Endothelial cell of umbilical vein (primary cell): ENCODE measurements at regions of chr14 and their contacts with region 1.

Region 1: GRCh38 chr14:75560962-75561432 is 17.4 kb upstream of the FLVCR2 start:
- DNase-seq: peak; percentile 76
- H3K4me3 ChIP-seq: no peak overlapping the region
- H3K27ac ChIP-seq: no peak overlapping the region
- H3K4me1 ChIP-seq: no peaks in the 10 kb centered on the region
- H3K27me3 ChIP-seq: peaks cover 0 to 4% of the 10 kb centered on the region in 2 experiments
- CTCF ChIP-seq: peak; percentile 88 to 90
- POLR2A ChIP-seq: no peak

Region 2: GRCh38 chr14:75132382-75133086 is 428.5 kb before region 1 on chr14:
- CTCF ChIA-PET with region 1: interaction called, 5 read pairs
- POLR2A ChIA-PET with region 1: no interaction called
- dilution Hi-C with region 1: no loop called
- intact Hi-C with region 1: loop called (anchors 10 kb)
- DNase-seq: peak; percentile 81
- H3K4me3 ChIP-seq: no peak overlapping the region
- H3K27ac ChIP-seq: no peak overlapping the region
- H3K4me1 ChIP-seq: peaks cover 10% of the 10 kb centered on the region
- H3K27me3 ChIP-seq: no peaks in the 10 kb centered on the region
- CTCF ChIP-seq: peak; percentile 38 to 55
- POLR2A ChIP-seq: no peak

Region 3: DNA sequence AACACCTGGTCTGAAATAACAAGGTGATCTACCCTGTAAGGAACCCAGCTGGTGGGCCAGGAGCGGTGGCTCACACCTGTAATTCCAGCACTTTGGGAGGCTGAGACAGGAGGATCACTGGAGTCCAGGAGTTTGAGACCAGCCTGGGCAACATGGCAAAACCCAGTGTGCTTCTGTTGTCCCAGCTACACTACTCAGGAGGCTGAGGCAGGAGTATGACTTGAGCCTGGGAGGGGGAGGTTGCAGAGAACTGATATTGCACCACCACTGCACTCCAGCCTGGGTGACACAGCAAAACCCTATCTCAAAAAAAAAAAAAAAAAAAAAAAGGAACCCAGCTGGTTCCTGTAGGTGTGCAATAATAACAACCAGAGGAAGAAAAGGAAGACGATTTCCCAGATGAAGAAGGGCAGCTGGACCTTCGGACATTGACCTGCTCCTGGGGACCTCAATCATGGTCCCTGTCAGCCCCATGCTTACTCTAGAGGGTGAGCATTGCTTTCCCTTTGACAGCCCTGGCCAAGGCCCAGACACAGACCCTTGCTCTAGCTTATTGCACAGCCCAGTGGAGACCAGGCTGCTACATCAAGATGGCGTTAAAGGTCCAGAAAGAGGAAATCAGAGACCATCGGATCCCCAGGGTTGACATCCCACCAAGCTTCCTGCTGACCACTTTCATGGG is 277.0 kb before region 1 on chr14:
- CTCF ChIA-PET with region 1: no interaction called
- POLR2A ChIA-PET with region 1: no interaction called
- dilution Hi-C with region 1: no loop called
- intact Hi-C with region 1: no loop called
- DNase-seq: no peak
- H3K4me3 ChIP-seq: no peak overlapping the region
- H3K27ac ChIP-seq: no peak overlapping the region
- H3K4me1 ChIP-seq: peaks cover 2% of the 10 kb centered on the region
- H3K27me3 ChIP-seq: peaks cover 7% of the 10 kb centered on the region in 2 experiments
- CTCF ChIP-seq: no peak
- POLR2A ChIP-seq: no peak

Region 4: DNA sequence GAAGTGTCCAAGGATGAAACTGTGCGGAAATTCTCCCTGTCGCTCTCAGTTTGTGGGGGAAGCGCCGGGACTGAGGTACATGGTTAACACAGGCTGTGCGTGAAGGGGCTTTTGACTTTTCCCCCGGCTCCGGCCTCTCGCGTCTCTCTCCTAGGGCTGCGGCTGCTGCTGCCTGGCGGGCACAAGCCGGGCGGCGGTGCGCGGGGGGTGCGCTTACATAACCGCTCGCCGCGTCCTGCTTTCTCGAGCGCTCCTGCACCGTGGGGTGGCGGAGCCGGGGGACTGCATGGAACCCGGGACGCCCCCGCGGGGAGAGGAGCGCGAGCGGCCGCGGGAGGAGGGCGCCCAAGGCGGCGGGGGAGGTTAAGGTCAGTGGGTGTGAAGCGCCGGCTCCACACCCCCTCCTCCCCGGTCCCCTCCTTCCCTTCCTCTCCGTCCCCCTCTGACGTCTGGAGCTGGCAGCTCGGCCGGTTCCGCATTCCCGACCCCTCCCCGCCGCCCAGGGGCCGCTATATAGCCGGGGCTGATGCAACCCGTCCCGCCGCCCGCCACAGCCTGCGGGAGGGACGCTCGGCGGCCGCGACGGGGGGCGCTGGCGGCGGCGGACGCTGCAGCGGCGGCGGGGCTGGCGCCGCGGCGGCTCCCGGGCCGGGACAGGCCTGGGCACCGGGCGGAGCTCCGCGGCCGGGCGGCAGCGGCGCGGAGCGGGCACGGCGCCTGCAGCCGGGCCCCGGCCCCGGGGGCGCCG is 133.3 kb before region 1 on chr14 and contains the start of gene JDP2:
- CTCF ChIA-PET with region 1: interaction called, 5 read pairs
- POLR2A ChIA-PET with region 1: no interaction called
- dilution Hi-C with region 1: no loop called
- intact Hi-C with region 1: loop called (anchors 1 kb)
- DNase-seq: peak; percentile 57
- H3K4me3 ChIP-seq: peak within 1 kb of the TSS; percentile 46 to 72 (median 52)
- H3K27ac ChIP-seq: no peak within 1 kb of the TSS
- H3K4me1 ChIP-seq: no peaks in the 10 kb centered on the region
- H3K27me3 ChIP-seq: peaks cover 15 to 22% of the 10 kb centered on the region in 2 experiments
- CTCF ChIP-seq: peak in 1 of 2 donors; percentile 0
- POLR2A ChIP-seq: peak; percentile 35
- total RNA-seq, gene JDP2: 10.6 and 10.8 TPM in 2 replicates

Region 5: GRCh38 chr14:75493580-75494130 is 67.3 kb before region 1 on chr14:
- CTCF ChIA-PET with region 1: interaction called, 87 read pairs
- POLR2A ChIA-PET with region 1: no interaction called
- dilution Hi-C with region 1: no loop called
- intact Hi-C with region 1: loop called (anchors 1 kb)
- DNase-seq: no peak
- H3K4me3 ChIP-seq: no peak overlapping the region
- H3K27ac ChIP-seq: no peak overlapping the region
- H3K4me1 ChIP-seq: no peaks in the 10 kb centered on the region
- H3K27me3 ChIP-seq: no peaks in the 10 kb centered on the region
- CTCF ChIP-seq: no peak
- POLR2A ChIP-seq: no peak

Region 6: DNA sequence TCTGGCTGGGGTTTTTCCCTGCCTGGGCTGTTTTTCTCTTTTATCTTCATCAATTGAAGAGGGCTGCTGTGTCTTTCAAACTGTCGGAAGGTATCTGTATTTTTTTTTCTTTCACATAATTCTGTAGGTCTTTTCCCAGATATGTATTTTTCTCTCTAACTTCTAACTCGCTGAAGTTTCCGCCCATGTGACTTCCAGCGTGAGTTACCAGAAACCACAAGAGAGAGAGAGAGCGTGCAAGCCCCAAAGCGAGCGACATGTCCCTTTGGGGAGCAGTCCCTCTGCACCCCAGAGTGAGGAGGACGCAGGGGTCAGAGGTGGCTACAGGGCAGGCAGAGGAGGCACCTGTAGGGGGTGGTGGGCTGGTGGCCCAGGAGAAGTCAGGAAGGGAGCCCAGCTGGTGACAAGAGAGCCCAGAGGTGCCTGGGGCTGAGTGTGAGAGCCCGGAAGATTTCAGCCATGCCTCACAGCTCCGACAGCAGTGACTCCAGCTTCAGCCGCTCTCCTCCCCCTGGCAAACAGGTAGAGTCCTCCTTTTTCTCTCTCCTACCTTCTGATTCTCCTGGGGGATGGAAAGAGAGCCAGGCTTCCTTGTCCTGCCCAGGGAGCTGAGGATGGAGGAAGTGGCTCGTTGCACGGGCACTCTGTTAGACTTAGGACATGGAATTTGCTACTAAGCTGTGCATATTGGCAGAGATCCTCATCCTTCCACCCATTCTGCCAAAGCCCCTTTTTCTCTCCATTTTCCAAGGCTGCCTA is 38.6 kb before region 1 on chr14 and contains the start of gene BATF:
- CTCF ChIA-PET with region 1: interaction called, 89 read pairs
- POLR2A ChIA-PET with region 1: no interaction called
- dilution Hi-C with region 1: no loop called
- intact Hi-C with region 1: loop called (anchors 1 kb)
- DNase-seq: no peak
- H3K4me3 ChIP-seq: no peak within 1 kb of the TSS
- H3K27ac ChIP-seq: peak within 1 kb of the TSS; percentile 82
- H3K4me1 ChIP-seq: peaks cover 25% of the 10 kb centered on the region
- H3K27me3 ChIP-seq: no peaks in the 10 kb centered on the region
- CTCF ChIP-seq: no peak
- POLR2A ChIP-seq: no peak
- total RNA-seq, gene BATF: not detected in 2 replicates

Region 7: GRCh38 chr14:75533791-75534555 is 27.0 kb before region 1 on chr14:
- CTCF ChIA-PET with region 1: interaction called, 21 read pairs
- POLR2A ChIA-PET with region 1: no interaction called
- dilution Hi-C with region 1: no loop called
- intact Hi-C with region 1: loop called (anchors 1 kb)
- DNase-seq: no peak
- H3K4me3 ChIP-seq: no peak overlapping the region
- H3K27ac ChIP-seq: no peak overlapping the region
- H3K4me1 ChIP-seq: peaks cover 18% of the 10 kb centered on the region
- H3K27me3 ChIP-seq: no peaks in the 10 kb centered on the region
- CTCF ChIP-seq: no peak
- POLR2A ChIP-seq: no peak

Region 8: DNA sequence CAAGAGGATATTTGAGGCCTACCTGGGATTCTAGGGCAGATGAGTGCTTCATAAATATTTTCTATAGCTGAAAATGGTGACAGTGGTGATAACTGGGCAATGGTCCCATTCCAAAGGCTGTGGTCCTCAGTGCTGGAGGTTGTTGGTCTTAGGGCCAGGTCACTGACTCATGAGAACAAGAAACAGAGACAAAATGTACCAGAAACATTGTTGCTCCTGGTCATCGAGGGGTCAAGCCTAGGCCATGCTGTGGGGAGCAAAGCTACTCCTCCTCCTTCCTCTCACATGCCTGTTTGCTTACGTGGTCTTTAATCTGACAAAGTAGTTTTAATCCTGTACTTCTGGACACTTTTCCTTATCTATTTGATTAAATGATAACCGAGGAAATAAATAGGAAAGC is 65.9 kb after region 1 on chr14:
- CTCF ChIA-PET with region 1: no interaction called
- POLR2A ChIA-PET with region 1: no interaction called
- dilution Hi-C with region 1: no loop called
- intact Hi-C with region 1: no loop called
- DNase-seq: no peak
- H3K4me3 ChIP-seq: no peak overlapping the region
- H3K27ac ChIP-seq: no peak overlapping the region
- H3K4me1 ChIP-seq: no peaks in the 10 kb centered on the region
- H3K27me3 ChIP-seq: peaks cover 0 to 10% of the 10 kb centered on the region in 2 experiments
- CTCF ChIP-seq: no peak
- POLR2A ChIP-seq: no peak

Region 9: GRCh38 chr14:75654127-75654732 is 93.2 kb after region 1 on chr14:
- CTCF ChIA-PET with region 1: interaction called, 28 read pairs
- POLR2A ChIA-PET with region 1: no interaction called
- dilution Hi-C with region 1: no loop called
- intact Hi-C with region 1: no loop called
- DNase-seq: peak; percentile 77
- H3K4me3 ChIP-seq: no peak overlapping the region
- H3K27ac ChIP-seq: no peak overlapping the region
- H3K4me1 ChIP-seq: peaks cover 6% of the 10 kb centered on the region
- H3K27me3 ChIP-seq: no peaks in the 10 kb centered on the region
- CTCF ChIP-seq: peak; percentile 92 to 94
- POLR2A ChIP-seq: no peak